Stomach (tissue), 19 donors: ENCODE measurements at regions of chr3 and their contacts with region 1.

Region 1: DNA sequence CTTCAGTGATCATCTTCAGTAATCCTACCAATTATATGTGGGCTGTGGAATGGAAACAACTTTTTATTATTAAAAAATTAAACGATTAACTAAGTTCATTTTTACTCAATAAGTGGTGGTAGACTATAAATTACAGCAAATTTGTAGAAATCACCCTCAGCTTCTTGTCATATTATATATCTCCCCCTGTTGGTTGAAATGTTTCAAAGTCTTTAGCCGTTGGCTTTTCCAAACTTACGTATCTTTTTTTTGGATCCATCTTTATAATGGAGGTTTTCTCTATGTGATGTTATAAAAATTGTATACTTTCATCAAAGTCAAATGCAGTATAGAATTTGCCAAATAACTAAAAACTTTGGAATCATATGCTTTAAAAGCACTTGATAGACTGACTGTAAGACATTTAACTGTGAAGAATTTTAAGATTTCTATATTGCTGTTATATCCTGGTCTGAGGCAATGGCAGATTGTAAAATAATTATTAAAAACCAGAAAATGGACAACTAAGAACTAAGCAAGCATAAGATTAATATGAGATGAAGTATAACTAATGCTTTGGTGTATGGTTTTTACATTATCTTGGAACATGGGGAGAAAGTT is 44.7 kb downstream of the ATP11B start:
- DNase-seq: peak in 1 of 2 donors; percentile 25
- H3K4me3 ChIP-seq: no peak overlapping the region
- H3K27ac ChIP-seq: no peak overlapping the region
- H3K4me1 ChIP-seq: peaks cover 0 to 4% (median 0%) of the 10 kb centered on the region in 4 donors
- H3K27me3 ChIP-seq: no peaks in the 10 kb centered on the region
- CTCF ChIP-seq: peak in 4 of 7 experiments; percentile 11 to 44 (median 39)
- EP300 ChIP-seq: no peak
- POLR2A ChIP-seq: no peak

Region 2: GRCh38 chr3:182713743-182714517 is 124.0 kb before region 1 on chr3:
- intact Hi-C with region 1: loop called (anchors 10 kb)
- DNase-seq: peak in 1 of 2 donors; percentile 85
- H3K4me3 ChIP-seq: no peak overlapping the region
- H3K27ac ChIP-seq: peak overlapping the region in 4 of 5 donors; percentile 17 to 79 (median 52)
- H3K4me1 ChIP-seq: peaks cover 5 to 53% (median 21%) of the 10 kb centered on the region in 4 donors
- H3K27me3 ChIP-seq: no peaks in the 10 kb centered on the region
- CTCF ChIP-seq: peak in 5 of 7 experiments; percentile 38 to 62 (median 46)
- EP300 ChIP-seq: no peak
- POLR2A ChIP-seq: no peak